ENCODE measurements at regions of chr9 and their contacts with region 1.

Region 1: GRCh38 chr9:36572515-36573418 is at the start of gene MELK:
- DNase-seq: peak; percentile 86
- H3K4me3 Mint-ChIP-seq: peak within 1 kb of the TSS; percentile 95
- H3K27ac Mint-ChIP-seq: peak within 1 kb of the TSS; percentile 81
- H3K4me1 Mint-ChIP-seq: peaks cover 27% of the 10 kb centered on the region
- H3K27me3 Mint-ChIP-seq: no peaks in the 10 kb centered on the region
- total RNA-seq, gene MELK: 53.9 to 55.3 TPM

Region 2: GRCh38 chr9:36400332-36401163 is 172.2 kb before region 1 on chr9:
- CTCF ChIA-PET with region 1: no interaction called
- intact Hi-C with region 1: loop called (anchors 1 kb)
- DNase-seq: peak; percentile 90
- H3K4me3 Mint-ChIP-seq: peak overlapping the region; percentile 86
- H3K27ac Mint-ChIP-seq: peak overlapping the region; percentile 95
- H3K4me1 Mint-ChIP-seq: peaks cover 37% of the 10 kb centered on the region
- H3K27me3 Mint-ChIP-seq: no peaks in the 10 kb centered on the region

Region 3: GRCh38 chr9:36499174-36499890 is 73.4 kb before region 1 on chr9:
- CTCF ChIA-PET with region 1: no interaction called
- intact Hi-C with region 1: loop called (anchors 5 kb)
- DNase-seq: no peak
- H3K4me3 Mint-ChIP-seq: no peak overlapping the region
- H3K27ac Mint-ChIP-seq: no peak overlapping the region
- H3K4me1 Mint-ChIP-seq: peaks cover 39% of the 10 kb centered on the region
- H3K27me3 Mint-ChIP-seq: no peaks in the 10 kb centered on the region

Region 4: GRCh38 chr9:36728651-36729520 is 156.1 kb after region 1 on chr9:
- CTCF ChIA-PET with region 1: no interaction called
- intact Hi-C with region 1: loop called (anchors 10 kb)
- DNase-seq: peak; percentile 83
- H3K4me3 Mint-ChIP-seq: no peak overlapping the region
- H3K27ac Mint-ChIP-seq: no peak overlapping the region
- H3K4me1 Mint-ChIP-seq: no peaks in the 10 kb centered on the region
- H3K27me3 Mint-ChIP-seq: no peaks in the 10 kb centered on the region

Region 5: DNA sequence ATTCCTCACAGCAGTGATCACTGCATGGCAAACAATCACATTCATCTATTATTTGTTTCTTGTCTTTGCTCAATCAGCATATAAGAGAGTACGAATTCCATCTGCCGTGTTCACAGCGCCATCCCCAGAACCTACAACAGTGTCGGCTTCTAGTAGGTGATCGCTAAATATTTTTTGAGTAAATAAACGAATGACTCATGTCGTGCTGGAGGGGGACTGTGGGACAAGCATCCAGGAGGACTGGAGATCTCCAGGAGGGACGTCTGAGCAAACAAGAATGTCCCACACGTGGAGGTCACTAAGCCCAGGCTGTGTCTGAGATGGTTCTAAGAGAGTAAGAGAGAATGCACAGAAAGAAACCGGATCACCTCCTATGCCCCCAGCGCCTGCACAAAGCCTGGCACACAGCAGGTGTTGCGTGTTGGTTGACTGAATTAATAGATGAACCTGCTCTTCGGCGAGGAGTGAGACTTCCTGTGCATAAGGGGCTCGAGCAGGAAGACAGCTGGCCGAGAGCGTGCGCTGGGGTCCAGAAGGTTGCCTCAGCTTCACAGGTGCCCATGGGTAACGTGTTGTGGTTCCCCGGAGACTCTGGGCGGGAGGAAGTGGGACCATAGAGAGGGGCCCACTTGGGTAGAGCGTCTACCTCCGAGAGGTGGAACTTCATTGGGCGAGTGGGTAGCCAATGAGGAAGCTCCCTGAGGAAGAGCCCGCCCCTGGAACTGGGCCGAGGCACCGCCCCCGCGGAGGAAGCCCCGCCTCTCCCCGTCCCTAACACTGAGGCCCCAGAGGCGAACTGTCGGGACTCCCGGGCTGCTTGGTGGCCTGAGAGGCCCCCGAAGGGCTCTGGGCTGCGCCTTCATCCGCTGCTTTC is 192.9 kb after region 1 on chr9:
- CTCF ChIA-PET with region 1: no interaction called
- intact Hi-C with region 1: loop called (anchors 2 kb)
- DNase-seq: peak; percentile 95
- H3K4me3 Mint-ChIP-seq: peak overlapping the region; percentile 70
- H3K27ac Mint-ChIP-seq: no peak overlapping the region
- H3K4me1 Mint-ChIP-seq: no peaks in the 10 kb centered on the region
- H3K27me3 Mint-ChIP-seq: peaks cover 4% of the 10 kb centered on the region

Region 6: DNA sequence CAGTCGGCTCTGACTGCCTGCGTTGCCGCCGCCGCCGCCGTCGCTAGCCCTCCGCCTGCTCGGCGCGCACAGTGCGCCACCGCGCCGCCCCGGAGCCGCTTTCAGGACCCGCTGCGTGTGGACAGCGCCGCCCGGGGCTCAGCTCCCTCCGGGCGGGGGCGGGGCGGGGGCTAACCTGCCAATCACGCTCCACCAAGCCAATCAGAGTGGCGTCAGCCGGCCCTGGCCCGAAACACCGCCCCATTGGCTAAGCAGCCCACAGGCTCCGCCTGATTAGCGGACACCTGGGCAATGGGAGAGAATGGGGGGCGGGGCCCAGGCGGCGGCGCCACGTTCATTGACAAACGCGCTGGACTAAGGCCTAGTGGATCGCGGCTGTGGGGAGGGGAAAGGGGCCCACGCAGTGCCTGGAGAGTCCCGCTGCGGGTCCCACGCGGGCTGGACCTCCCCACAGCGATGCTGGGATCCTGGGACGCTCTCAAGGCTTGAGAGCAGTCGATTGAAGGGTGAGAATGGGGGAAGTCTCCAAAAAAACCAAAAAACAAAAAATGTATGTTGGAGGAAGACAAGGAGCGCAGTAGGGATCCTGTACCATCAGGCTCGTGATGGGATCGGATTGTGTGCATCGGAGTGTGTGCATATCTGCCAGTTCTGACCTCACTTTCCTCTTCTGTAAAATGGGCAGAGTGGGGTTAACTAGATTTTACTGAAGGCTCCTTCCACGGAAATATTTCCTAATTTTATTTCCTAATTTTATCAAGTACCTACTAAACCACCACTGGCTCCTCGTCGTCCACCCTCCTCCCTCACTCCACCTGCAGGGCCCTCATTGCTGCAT is 455.0 kb after region 1 on chr9:
- CTCF ChIA-PET with region 1: no interaction called
- intact Hi-C with region 1: no loop called
- DNase-seq: peak; percentile 95
- H3K4me3 Mint-ChIP-seq: peak overlapping the region; percentile 66
- H3K27ac Mint-ChIP-seq: no peak overlapping the region
- H3K4me1 Mint-ChIP-seq: peaks cover 48% of the 10 kb centered on the region
- H3K27me3 Mint-ChIP-seq: peaks cover 85% of the 10 kb centered on the region

Measured in activated naive CD4-positive, alpha-beta T cell treated with anti-CD3 and anti-CD28 coated beads for 36 hours (primary cell).